ENCODE measurements at regions of chr20 and their contacts with region 1.

Region 1: GRCh38 chr20:33005132-33005566 is 916 bp upstream of the SUN5 start:
- DNase-seq: peak; percentile 72
- ATAC-seq: no peak
- H3K4me3 ChIP-seq: peak overlapping the region in 1 of 3 experiments; percentile 79; a peak in 1 of 6 replicates
- H3K27ac ChIP-seq: no peak overlapping the region
- H3K4me1 ChIP-seq: peaks cover 86% of the 10 kb centered on the region
- H3K27me3 ChIP-seq: peaks cover 0 to 6% of the 10 kb centered on the region in 2 experiments; a peak in 1 of 5 replicates
- CTCF ChIP-seq: peak; percentile 82
- EP300 ChIP-seq: no peak
- POLR2A ChIP-seq: no peak
- RAD21 ChIP-seq: peak; percentile 63

Region 2: GRCh38 chr20:33023439-33024242 is 18.5 kb after region 1 on chr20:
- CTCF ChIA-PET with region 1: no interaction called
- POLR2A ChIA-PET with region 1: interaction called, 8 read pairs
- in situ Hi-C with region 1: no loop called
- intact Hi-C with region 1: loop called (anchors 1 kb)
- DNase-seq: no peak
- ATAC-seq: no peak
- H3K4me3 ChIP-seq: no peak overlapping the region
- H3K27ac ChIP-seq: no peak overlapping the region
- H3K4me1 ChIP-seq: peaks cover 20% of the 10 kb centered on the region
- H3K27me3 ChIP-seq: peaks cover 0 to 2% of the 10 kb centered on the region in 2 experiments; a peak in 2 of 5 replicates
- CTCF ChIP-seq: no peak
- EP300 ChIP-seq: no peak
- POLR2A ChIP-seq: peak in 1 of 2 experiments; percentile 36; a peak in 2 of 4 replicates
- RAD21 ChIP-seq: no peak

Region 3: DNA sequence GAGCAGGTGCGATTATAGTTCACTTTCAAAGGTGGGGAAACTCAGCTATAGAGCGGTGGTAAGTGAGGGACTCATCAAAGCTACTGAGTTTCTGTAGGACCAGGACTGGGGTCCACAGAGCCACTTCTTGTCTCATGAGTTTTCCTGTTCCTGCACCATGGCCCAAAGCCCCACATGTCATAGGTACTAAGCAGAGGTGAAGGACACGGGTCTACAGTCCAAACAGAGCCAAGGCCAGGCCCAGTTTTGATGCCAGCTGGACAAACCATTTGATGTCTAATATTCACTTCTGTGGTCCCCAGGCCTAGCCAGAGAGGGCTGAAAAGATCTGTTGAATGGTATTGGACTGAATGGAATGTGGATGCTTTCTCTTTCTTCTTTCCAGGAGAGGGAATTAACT is 37.3 kb after region 1 on chr20:
- CTCF ChIA-PET with region 1: no interaction called
- POLR2A ChIA-PET with region 1: interaction called, 16 read pairs
- in situ Hi-C with region 1: no loop called
- intact Hi-C with region 1: loop called (anchors 5 kb)
- DNase-seq: no peak
- ATAC-seq: peak; percentile 32
- H3K4me3 ChIP-seq: no peak overlapping the region
- H3K27ac ChIP-seq: no peak overlapping the region
- H3K4me1 ChIP-seq: peaks cover 34% of the 10 kb centered on the region
- H3K27me3 ChIP-seq: no peaks in the 10 kb centered on the region; a peak in 1 of 5 replicates
- CTCF ChIP-seq: no peak
- EP300 ChIP-seq: 0 out of 4 replicates have a peak, but pooled peaks of 1 of the 2 experiments have one; percentile 5
- POLR2A ChIP-seq: no peak
- RAD21 ChIP-seq: no peak